ENCODE measurements at regions of chr4 and their contacts with region 1.

Region 1: DNA sequence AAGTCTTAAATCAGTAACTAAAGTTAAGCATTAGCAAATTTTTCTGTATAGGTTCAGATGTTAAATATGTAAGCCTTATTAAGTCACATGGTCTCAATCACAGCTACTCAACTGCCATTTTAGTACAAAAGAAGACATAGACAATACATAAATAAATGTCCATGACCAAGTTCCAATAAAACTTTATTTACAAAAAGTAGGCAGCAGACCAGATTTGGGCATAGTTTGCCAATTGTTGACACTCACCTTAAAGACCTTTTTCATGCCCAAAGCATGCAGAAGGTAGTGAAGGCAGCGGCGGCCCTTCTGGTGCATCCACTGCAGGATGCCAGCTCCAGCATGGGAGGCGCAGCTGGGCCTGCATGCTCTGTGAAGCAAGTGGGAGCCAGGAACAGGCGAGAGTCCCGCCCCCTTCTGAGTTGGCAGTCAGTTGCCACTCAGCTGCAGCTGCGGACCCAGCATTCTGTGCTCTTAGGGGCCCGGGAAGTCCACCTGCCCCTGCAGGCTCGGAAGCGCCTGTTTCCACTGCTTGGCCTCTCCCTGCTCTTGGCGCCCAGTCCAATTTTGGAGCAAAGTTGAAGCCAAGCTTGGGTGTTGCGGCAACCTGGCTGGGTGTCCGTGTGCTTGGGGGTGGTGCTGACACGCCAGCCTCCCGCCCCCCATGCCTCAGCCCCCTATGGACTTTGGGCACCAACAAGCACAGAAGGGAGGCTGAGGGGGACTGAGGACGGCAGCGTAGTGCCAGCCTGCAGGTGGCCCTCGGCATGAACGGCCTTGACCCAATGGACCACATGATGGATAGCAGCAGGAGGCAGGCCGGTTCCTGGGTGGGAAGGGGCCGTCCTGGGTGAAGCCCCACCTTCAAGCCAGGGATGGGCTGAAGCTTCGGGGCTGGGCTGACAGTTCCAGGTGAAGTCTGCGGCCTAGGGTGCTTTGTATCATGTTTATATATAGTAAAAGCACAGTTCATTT is 42.4 kb upstream of the PABPC4L start:
- DNase-seq: no peak
- H3K4me3 Mint-ChIP-seq: no peak overlapping the region
- H3K27ac Mint-ChIP-seq: no peak overlapping the region
- H3K4me1 Mint-ChIP-seq: no peaks in the 10 kb centered on the region
- H3K27me3 Mint-ChIP-seq: no peaks in the 10 kb centered on the region

Region 2: DNA sequence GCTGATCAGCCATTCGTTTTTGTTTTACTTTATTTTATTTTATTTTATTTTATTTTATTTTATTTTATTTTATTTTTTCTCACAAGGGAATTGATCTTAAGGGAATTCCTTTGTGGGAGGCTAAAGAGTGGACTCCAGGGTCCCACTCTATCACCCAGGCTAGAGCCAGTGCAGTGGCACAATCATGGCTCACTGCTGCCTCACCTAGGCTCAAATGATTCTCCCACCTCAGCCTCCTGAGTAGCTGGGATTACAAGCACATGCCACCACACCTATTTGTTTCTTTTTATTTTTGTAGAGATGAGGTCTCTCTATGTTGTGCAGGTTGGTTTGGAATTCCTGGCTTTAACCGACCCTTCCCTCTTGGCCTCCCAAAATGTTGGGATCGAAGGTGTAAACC is 25.0 kb before region 1 on chr4:
- intact Hi-C with region 1: loop called (anchors 2 kb)
- DNase-seq: no peak
- H3K4me3 Mint-ChIP-seq: no peak overlapping the region
- H3K27ac Mint-ChIP-seq: no peak overlapping the region
- H3K4me1 Mint-ChIP-seq: no peaks in the 10 kb centered on the region
- H3K27me3 Mint-ChIP-seq: no peaks in the 10 kb centered on the region